OCI-LY7 (cell line): ENCODE measurements at regions of chr2 and their contacts with region 1.

Region 1: GRCh38 chr2:190648289-190649034 is 421 bp upstream of the NAB1 start:
- DNase-seq: peak; percentile 81
- H3K4me3 ChIP-seq: peak overlapping the region; percentile 85
- H3K27ac ChIP-seq: peak overlapping the region; percentile 31
- H3K4me1 ChIP-seq: peaks cover 15% of the 10 kb centered on the region
- CTCF ChIP-seq: no peak

Region 2: DNA sequence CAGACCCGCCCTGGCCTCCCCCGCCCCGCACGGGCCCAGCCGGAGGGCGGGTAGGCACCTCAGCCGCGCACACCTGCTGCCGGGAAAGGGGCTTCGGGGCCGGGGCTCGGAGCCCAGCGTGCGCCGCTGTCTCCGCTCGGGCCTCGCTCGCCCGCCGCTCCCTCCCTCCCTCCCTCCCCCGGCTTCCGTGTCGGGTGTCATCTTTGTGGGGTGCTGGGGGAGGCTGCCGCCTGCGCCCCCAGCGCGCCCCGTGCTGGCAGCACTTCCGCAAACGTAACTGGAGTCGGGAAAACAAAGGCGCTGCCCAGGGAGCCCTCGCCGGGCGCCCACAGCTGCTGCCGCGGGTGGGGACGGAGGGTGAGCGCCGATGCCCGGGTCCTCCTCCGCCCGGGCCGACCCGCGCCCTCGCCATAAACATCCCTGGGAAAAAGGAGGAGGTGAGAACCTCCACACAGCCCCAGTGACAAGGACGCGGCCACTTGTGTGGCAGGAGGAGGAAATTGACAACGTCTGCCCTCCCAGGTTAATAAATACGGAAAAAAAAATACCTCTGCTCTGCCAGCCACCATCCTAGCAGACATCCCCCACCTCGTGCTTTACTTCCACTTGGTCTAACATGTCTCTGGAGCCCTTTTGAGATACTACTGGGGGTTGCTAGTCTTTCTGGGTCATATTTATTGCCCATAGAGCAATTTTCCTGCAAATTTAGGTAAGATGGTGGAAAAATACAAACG is 239.8 kb before region 1 on chr2:
- CTCF ChIA-PET with region 1: no interaction called
- POLR2A ChIA-PET with region 1: interaction called, 3 read pairs
- intact Hi-C with region 1: loop called (anchors 2 kb)
- DNase-seq: peak; percentile 65
- H3K4me3 ChIP-seq: peak overlapping the region; percentile 84
- H3K27ac ChIP-seq: peak overlapping the region; percentile 46
- H3K4me1 ChIP-seq: peaks cover 16% of the 10 kb centered on the region
- CTCF ChIP-seq: no peak

Region 3: GRCh38 chr2:190668892-190669291 is 20.4 kb after region 1 on chr2:
- CTCF ChIA-PET with region 1: no interaction called
- POLR2A ChIA-PET with region 1: interaction called, 24 read pairs
- intact Hi-C with region 1: no loop called
- DNase-seq: no peak
- H3K4me3 ChIP-seq: no peak overlapping the region
- H3K27ac ChIP-seq: no peak overlapping the region
- H3K4me1 ChIP-seq: no peaks in the 10 kb centered on the region
- CTCF ChIP-seq: no peak